Posterior cingulate gyrus (tissue), 11 donors: ENCODE measurements at regions of chr20 and their contacts with region 1.

Region 1: DNA sequence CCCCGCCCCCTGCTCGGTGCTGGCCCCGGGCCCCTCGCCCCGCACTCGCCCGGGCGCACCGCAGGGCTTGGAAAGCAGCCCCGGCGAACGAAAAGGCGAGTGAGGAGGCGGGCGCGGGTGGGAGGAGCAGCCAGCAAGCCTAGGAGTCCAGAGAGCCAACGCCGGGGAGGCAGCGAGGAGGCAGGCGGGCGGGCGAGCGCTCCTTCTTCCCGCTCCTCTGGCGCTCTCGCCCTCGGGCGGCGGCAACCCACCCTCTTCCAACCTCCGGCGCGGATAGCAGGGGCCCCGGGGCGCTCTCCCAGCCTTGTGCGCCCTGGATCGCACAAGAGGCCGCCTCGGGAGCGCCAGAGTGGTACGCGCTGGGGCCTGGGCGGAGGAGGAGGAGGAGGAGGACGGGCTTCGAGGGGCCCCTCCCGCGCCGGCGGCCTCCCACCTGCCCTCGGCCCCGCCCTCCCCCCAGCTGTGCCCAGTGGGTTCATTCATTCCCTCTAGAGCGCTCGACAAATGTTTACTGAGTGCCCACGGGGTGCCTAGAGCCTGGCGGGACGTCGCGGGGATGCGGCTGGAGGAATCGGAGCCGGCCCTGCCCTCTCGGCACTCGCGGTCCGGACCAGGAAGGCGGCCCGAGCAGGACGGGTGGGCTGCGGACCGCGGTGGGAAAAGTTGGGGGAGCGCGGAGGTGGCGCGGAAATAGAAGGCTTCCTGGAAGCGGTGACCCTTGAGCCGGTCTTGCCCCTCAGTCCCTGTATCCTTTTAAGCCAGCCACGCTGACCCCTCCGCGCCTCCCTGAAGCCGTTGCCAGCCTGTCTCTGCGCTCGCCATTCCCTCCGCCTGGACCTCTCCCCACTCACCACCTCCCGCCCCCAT is at the start of gene BMP7:
- DNase-seq: peak in 6 of 10 donors; percentile 39 to 90 (median 72)

Region 2: GRCh38 chr20:57089691-57090150 is 176.8 kb before region 1 on chr20:
- intact Hi-C with region 1: loop called (anchors 10 kb)
- DNase-seq: peak; percentile 55 to 96 (median 84)

Region 3: GRCh38 chr20:57329608-57330221 is 63.2 kb after region 1 on chr20 and contains the start of gene SPO11:
- intact Hi-C with region 1: loop called (anchors 10 kb)
- DNase-seq: peak in 2 of 10 donors; percentile 25 to 84